Activated T-helper 2 cell treated with anti-CD3 and anti-CD28 coated beads, Interferon-gamma antibody, Interleukin-2, Interleukin-4, amounts not matched to agents 10 μg/mL and 5 μg/mL and 100 μg/mL, durations not matched to agents 14 hours and 24 hours and 36 hours (primary cell): ENCODE measurements at regions of chr5 and their contacts with region 1.

Region 1: DNA sequence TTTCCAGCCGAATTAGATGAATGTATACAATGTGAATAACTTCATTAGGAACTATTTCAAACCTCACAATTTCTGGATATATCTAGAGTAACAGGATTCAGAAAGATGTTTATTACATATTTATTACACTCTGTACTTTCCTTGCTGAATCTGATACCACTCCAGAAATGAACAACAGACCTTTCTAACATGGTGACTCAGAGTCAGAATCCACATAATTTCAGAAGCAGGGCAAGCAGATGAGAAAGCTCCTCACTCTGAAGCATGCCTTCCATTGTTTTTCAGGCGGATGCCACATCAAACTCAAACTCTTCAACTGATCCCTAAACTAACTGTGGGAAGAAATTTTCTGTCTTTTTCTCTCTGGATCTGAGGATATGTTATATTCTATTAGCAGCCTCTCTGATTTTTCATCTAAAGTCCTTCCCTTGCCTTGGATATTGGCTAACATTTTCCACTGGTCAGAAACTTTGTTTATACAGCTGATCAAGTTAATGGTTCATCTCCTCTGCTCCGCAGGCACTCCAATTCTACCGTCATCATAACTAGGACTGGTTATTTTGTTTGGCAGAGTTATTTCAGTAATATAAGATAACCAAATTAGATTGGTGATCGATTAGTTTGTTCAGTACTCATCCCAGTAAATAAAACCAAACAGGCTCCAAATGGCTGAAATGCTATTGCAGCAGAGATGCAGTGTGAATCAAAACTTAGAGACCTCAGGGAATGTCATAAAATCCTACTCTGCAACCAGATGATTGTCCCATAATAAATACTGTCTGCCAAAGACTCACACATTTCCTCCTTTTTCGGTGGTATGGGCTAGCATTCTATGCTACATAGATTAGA is 556.0 kb downstream of the EBF1 start:
- DNase-seq: no peak
- H3K4me3 Mint-ChIP-seq: no peak overlapping the region
- H3K27ac Mint-ChIP-seq: no peak overlapping the region
- H3K4me1 Mint-ChIP-seq: peaks cover 19% of the 10 kb centered on the region
- H3K27me3 Mint-ChIP-seq: peaks cover 8% of the 10 kb centered on the region

Region 2: DNA sequence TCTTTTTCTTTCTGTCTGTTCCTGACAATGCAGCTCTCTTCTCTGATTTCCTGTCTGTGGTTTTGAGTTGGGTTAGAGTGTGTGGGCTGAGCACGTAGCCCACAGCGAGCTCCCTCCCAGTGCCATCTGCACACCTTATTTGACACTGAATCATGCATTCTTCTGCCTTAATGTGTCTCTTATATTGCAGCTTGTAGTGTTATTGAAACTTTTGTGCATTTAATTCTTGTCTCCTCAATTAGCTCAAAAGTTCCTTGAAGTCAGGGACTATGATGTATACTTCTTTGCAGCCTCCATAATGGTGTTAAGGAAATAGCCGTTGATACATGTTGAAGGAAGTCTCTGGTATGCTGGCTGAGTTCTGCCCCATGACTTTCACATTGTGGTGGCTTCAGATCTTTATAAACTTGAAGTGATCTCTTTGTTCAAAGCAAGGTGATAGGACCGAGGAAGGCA is 108.6 kb before region 1 on chr5:
- intact Hi-C with region 1: loop called (anchors 2 kb)
- DNase-seq: peak; percentile 36
- H3K4me3 Mint-ChIP-seq: peak overlapping the region; percentile 57
- H3K27ac Mint-ChIP-seq: peak overlapping the region; percentile 74
- H3K4me1 Mint-ChIP-seq: peaks cover 49% of the 10 kb centered on the region
- H3K27me3 Mint-ChIP-seq: no peaks in the 10 kb centered on the region

Region 3: GRCh38 chr5:158682631-158683030 is 138.9 kb after region 1 on chr5:
- intact Hi-C with region 1: no loop called
- DNase-seq: no peak
- H3K4me3 Mint-ChIP-seq: no peak overlapping the region
- H3K27ac Mint-ChIP-seq: no peak overlapping the region
- H3K4me1 Mint-ChIP-seq: no peaks in the 10 kb centered on the region
- H3K27me3 Mint-ChIP-seq: no peaks in the 10 kb centered on the region

Region 4: DNA sequence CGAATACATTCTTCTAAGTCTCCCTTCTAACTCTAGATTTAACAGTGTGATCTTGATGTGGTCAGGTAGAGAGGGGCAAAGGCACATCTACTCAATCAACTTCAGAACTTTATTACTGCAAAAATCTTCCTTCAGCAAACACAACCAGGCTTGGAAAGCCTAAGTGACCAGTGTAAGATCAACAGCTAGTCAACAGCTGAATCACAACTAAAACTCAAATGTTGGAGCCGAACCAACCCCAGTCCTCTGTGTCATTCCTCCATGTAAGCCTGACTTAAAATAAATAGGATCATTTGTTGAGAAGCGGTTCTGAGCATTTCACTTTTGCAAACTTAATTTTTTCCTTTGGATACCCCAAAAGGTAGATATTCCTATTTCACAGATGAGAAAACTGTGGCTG is 203.2 kb after region 1 on chr5:
- intact Hi-C with region 1: no loop called
- DNase-seq: no peak
- H3K4me3 Mint-ChIP-seq: no peak overlapping the region
- H3K27ac Mint-ChIP-seq: no peak overlapping the region
- H3K4me1 Mint-ChIP-seq: peaks cover 4% of the 10 kb centered on the region
- H3K27me3 Mint-ChIP-seq: peaks cover 9% of the 10 kb centered on the region